ENCODE measurements at regions of chr6 and their contacts with region 1.

Region 1: GRCh38 chr6:151014404-151015100 is 149.1 kb downstream of the MTHFD1L start:
- DNase-seq: peak; percentile 21 to 78
- ATAC-seq: peak; percentile 71 to 84
- H3K4me3 ChIP-seq: no peak overlapping the region
- H3K27ac ChIP-seq: peak overlapping the region; percentile 66 to 78
- H3K4me1 ChIP-seq: peaks cover 36% of the 10 kb centered on the region
- CTCF ChIP-seq: peak; percentile 78
- EP300 ChIP-seq: no peak
- POLR2A ChIP-seq: no peak
- RAD21 ChIP-seq: peak; percentile 88 to 94

Region 2: GRCh38 chr6:151004415-151005024 is 10.0 kb before region 1 on chr6:
- CTCF ChIA-PET with region 1: interaction called, 14 read pairs
- POLR2A ChIA-PET with region 1: no interaction called
- DNase-seq: peak; percentile 30 to 75
- ATAC-seq: peak; percentile 82 to 88
- H3K4me3 ChIP-seq: no peak overlapping the region
- H3K27ac ChIP-seq: peak overlapping the region; percentile 58 to 80; a peak in 5 of 6 replicates
- H3K4me1 ChIP-seq: peaks cover 42% of the 10 kb centered on the region
- CTCF ChIP-seq: no peak
- EP300 ChIP-seq: peak; percentile 23 to 45; a peak in 2 of 5 replicates
- POLR2A ChIP-seq: no peak
- RAD21 ChIP-seq: no peak

Region 3: GRCh38 chr6:151025076-151025475 is 10.5 kb after region 1 on chr6:
- CTCF ChIA-PET with region 1: interaction called, 22 read pairs
- POLR2A ChIA-PET with region 1: no interaction called
- DNase-seq: no peak
- ATAC-seq: no peak
- H3K4me3 ChIP-seq: no peak overlapping the region
- H3K27ac ChIP-seq: peak overlapping the region; percentile 30 to 75; a peak in 3 of 6 replicates
- H3K4me1 ChIP-seq: peaks cover 43% of the 10 kb centered on the region
- CTCF ChIP-seq: no peak
- EP300 ChIP-seq: no peak
- POLR2A ChIP-seq: no peak
- RAD21 ChIP-seq: no peak

Region 4: DNA sequence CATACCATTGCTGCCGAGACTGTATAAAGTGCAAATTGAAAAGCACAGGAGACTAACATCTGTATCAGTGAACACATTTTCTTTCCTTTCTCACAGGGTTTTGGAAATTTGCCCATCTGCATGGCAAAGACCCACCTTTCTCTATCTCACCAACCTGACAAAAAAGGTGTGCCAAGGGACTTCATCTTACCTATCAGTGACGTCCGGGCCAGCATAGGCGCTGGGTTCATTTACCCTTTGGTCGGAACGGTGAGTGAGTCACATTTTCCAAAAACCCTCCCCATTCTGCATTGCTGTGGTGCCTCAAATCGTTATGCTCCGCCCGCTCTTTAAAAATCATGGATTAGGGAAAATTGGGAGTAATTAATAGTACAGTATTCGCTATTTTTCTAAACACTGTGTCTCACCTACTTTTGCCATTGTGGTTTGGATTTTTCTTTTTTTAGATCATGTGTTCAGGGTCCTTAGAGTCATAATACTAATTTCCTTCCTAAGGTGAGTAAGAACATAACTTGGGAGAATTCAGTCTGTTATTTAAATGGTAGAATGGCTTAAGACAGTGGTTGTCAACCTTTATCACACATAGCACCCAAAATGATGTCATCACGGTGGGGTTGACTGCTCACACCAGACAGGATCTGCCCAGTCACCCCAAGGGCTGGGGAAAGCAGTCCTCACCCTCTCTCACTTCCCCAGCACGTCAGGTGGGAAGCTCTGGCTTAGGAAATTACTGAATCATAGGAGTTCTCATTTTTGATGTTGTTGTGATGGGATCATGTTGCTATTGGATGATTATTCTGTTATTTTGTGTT is 22.5 kb after region 1 on chr6:
- CTCF ChIA-PET with region 1: interaction called, 15 read pairs
- POLR2A ChIA-PET with region 1: no interaction called
- DNase-seq: no peak
- ATAC-seq: no peak
- H3K4me3 ChIP-seq: no peak overlapping the region
- H3K27ac ChIP-seq: peak overlapping the region; percentile 97 to 99
- H3K4me1 ChIP-seq: peaks cover 55% of the 10 kb centered on the region
- CTCF ChIP-seq: no peak
- EP300 ChIP-seq: no peak
- POLR2A ChIP-seq: no peak
- RAD21 ChIP-seq: no peak

Region 5: DNA sequence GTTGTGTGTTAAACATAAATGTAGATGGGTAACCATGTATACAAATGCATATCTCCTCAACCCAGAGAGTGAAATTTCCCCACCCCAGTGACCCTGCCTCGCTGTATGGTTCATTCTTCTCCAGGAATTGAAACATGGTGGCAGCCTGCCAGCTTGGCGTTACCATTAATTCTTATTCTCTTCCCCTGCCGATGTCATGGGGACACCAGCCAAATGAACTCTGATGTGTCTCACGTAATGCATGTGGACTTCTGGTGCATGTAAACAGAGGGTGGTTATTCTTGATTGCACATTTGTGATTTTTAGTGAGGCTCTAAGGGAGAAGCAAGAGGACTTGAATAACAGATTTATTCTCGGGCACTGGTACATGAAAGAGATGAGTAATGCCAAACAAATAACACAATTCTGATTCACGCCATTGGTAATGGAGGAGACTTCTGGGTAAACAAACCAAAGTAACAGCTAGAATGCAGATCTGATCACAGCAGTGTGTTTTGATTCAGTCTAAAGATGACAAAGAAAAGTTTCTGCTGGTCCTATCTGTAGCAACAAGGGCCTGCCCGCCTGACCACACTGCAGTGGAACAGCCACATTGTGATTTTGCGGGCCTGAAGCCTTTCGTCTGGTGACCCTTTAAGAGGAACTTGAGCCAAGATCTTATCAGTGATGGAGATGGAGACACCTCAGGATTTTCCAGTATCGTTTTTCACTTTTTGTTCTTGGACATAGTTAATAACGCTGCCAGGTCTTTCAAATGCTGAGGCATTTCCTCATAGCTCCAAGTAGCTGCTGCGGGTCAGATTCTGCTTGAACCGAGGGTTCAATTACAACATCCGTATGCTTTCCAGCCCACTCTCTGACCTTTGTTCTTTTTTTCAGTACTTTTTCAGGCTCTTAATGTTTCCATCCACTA is 53.4 kb after region 1 on chr6:
- CTCF ChIA-PET with region 1: interaction called, 10 read pairs
- POLR2A ChIA-PET with region 1: interaction called, 4 read pairs
- DNase-seq: peak; percentile 74 to 99
- ATAC-seq: peak; percentile 92 to 95
- H3K4me3 ChIP-seq: no peak overlapping the region
- H3K27ac ChIP-seq: peak overlapping the region; percentile 90 to 98
- H3K4me1 ChIP-seq: peaks cover 62% of the 10 kb centered on the region
- CTCF ChIP-seq: no peak
- EP300 ChIP-seq: peak; percentile 92 to 96; a peak in 4 of 5 replicates
- POLR2A ChIP-seq: no peak
- RAD21 ChIP-seq: peak; percentile 21 to 53; a peak in 4 of 5 replicates

Region 6: DNA sequence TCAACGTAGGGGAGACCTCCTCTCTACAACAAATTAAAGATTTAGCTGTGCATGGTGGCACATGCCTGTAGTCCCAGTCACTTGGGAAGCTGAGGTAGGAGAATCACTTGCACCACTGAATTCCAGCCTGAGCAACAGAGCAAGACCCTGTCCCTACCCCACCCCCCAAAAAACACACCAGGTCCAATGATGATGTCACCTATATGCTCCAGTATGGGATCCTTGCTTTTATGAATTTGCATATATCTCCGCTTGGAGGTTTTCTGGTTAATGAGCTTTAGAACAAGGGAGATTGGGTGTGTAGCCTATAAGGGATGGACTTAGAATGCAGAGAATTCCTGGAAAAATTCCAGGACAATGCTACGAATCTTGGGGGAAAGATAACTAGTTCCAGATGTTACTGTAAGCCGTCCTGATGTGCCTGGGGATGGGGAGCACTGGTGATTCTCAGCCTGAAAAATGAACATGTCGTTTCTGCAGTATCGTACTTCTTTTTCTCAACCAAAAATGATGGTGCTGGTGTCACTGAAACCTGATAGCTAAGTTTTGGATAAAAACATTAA is 315.7 kb after region 1 on chr6:
- CTCF ChIA-PET with region 1: interaction called, 192 read pairs
- POLR2A ChIA-PET with region 1: interaction called, 5 read pairs
- DNase-seq: no peak
- ATAC-seq: no peak
- H3K4me3 ChIP-seq: no peak overlapping the region
- H3K27ac ChIP-seq: no peak overlapping the region
- H3K4me1 ChIP-seq: peaks cover 12% of the 10 kb centered on the region; the same call in 1 of the 3 replicates
- CTCF ChIP-seq: no peak
- EP300 ChIP-seq: no peak
- POLR2A ChIP-seq: no peak
- RAD21 ChIP-seq: no peak

Measured in A549 (cell line).